ENCODE measurements at regions of chr9 and their contacts with region 1.

Region 1: GRCh38 chr9:72557549-72557948 is 36.1 kb downstream of the TMC1 start:
- DNase-seq: peak; percentile 9
- H3K4me3 Mint-ChIP-seq: no peak overlapping the region
- H3K27ac Mint-ChIP-seq: peak overlapping the region; percentile 69
- H3K4me1 Mint-ChIP-seq: peaks cover 17% of the 10 kb centered on the region
- H3K27me3 Mint-ChIP-seq: peaks cover 3% of the 10 kb centered on the region

Region 2: GRCh38 chr9:72526901-72527800 is 30.4 kb before region 1 on chr9:
- intact Hi-C with region 1: loop called (anchors 1 kb)
- DNase-seq: peak; percentile 61
- H3K4me3 Mint-ChIP-seq: peak overlapping the region; percentile 72
- H3K27ac Mint-ChIP-seq: peak overlapping the region; percentile 94
- H3K4me1 Mint-ChIP-seq: peaks cover 43% of the 10 kb centered on the region
- H3K27me3 Mint-ChIP-seq: no peaks in the 10 kb centered on the region

Region 3: DNA sequence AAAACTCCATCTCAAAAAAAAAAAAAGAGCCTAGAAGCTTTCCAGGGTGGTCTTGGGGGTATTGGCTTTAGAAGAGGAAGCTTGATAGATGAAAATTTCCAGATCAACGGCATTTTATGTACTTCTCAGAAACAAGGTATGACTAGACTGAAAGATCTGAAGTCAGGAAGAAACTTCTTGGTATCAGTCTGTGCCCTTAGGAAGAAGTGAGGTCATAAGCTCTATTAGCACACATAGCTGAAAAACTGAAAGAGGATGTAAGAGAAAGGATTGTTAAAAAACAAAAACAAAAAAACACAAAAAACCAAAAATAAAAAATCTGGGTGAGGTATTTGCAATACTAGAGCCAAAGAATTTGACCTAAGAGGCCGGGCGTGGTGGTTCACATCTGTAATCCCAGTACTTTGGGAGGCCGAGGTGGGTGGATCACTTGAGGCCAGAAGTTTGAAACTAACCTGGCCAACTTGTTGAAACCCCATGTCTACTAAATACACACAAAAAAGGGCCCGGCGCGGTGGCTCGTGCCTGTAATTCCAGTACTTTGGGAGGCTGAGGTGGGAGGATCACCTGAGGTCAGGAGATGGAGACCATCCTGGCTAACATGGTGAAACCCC is 15.8 kb before region 1 on chr9:
- intact Hi-C with region 1: loop called (anchors 1 kb)
- DNase-seq: no peak
- H3K4me3 Mint-ChIP-seq: no peak overlapping the region
- H3K27ac Mint-ChIP-seq: peak overlapping the region; percentile 73
- H3K4me1 Mint-ChIP-seq: peaks cover 26% of the 10 kb centered on the region
- H3K27me3 Mint-ChIP-seq: no peaks in the 10 kb centered on the region

Region 4: DNA sequence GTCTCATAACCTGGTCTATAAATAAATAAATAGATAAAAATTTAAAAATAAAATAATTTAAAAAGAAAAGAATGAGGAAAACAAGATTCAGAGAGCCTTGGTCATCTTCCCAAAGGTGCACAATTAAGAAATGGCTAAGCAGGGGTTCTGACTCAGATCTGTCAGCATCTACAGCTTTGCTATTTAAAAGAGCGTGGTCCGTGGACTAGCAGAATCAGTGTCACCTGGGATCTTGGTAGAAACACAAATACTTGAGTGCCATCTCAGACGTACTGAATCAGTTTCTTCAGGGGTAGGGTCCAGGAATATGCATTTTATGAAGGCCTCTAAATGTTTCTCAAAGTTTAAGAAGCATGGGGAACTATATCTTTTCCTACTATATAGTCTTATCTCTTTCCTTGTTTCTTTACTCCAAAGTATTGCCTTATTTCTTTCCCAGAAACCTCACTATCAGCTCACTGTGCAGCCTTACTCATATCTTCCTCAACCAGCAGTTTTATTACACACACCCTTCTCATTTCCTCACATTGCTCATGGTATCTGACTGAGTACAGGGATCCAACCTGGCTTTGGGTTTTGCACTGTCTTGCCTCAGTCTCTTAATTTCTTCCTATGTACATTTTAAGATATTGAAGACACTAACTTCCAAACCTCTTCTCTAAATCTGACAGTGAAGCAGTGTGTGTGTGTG is 22.5 kb after region 1 on chr9:
- intact Hi-C with region 1: loop called (anchors 2 kb)
- DNase-seq: no peak
- H3K4me3 Mint-ChIP-seq: no peak overlapping the region
- H3K27ac Mint-ChIP-seq: peak overlapping the region; percentile 26
- H3K4me1 Mint-ChIP-seq: peaks cover 41% of the 10 kb centered on the region
- H3K27me3 Mint-ChIP-seq: no peaks in the 10 kb centered on the region